Heart right ventricle (tissue), 16 donors: ENCODE measurements at regions of chr13 and their contacts with region 1.

Region 1: DNA sequence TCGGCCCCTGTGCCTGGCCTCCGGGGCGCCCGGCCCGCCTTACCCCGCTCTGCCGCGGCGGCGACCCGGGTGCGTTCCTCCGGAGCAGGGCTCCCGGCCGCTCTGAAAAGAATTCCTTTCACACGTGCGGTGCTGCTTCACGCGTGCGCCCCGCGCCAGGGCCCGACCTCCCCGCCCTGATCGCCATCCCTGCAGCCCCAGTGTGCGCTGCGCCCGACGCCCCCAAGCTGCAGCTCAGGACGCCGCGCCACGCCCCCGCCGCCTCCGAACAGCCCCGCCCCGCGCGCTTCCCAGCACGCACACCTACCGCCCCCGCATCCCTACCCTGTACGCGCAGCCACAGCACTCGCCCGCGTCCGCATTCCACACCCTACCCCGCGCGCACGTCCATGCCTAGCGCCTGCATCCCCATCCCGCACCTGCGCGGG is at the start of gene GJA3:
- DNase-seq: peak; percentile 61 to 66
- ATAC-seq: peak; percentile 79 to 93 (median 86)
- H3K4me3 ChIP-seq: peak within 1 kb of the TSS; percentile 33 to 66 (median 62)
- H3K27ac ChIP-seq: peak within 1 kb of the TSS; percentile 19 to 89 (median 79)
- H3K4me1 ChIP-seq: peaks cover 0 to 23% (median 12%) of the 10 kb centered on the region in 9 donors
- H3K27me3 ChIP-seq: peaks cover 0 to 93% (median 76%) of the 10 kb centered on the region in 7 donors
- CTCF ChIP-seq: peak in 3 of 9 donors; percentile 31 to 36 (median 35)
- total RNA-seq, gene GJA3: 14.2 to 30.1 (median 19.4) TPM

Region 2: GRCh38 chr13:19984430-19985218 is 176.2 kb before region 1 on chr13:
- intact Hi-C with region 1: loop called in 4 of 10 experiments (anchors 2 to 10 kb)
- DNase-seq: no peak
- ATAC-seq: peak in 6 of 8 donors; percentile 48 to 60 (median 58)
- H3K4me3 ChIP-seq: no peak overlapping the region
- H3K27ac ChIP-seq: peak overlapping the region in 1 of 10 donors; percentile 28
- H3K4me1 ChIP-seq: peaks cover 0 to 30% (median 16%) of the 10 kb centered on the region in 9 donors
- H3K27me3 ChIP-seq: no peaks in the 10 kb centered on the region
- CTCF ChIP-seq: peak in 7 of 9 donors; percentile 41 to 69 (median 55)

Region 3: GRCh38 chr13:20049558-20050473 is 111.0 kb before region 1 on chr13:
- intact Hi-C with region 1: loop called in 4 of 10 experiments (anchors 5 to 10 kb)
- DNase-seq: no peak
- ATAC-seq: no peak
- H3K4me3 ChIP-seq: peak overlapping the region in 2 of 10 donors; percentile 2 to 12
- H3K27ac ChIP-seq: peak overlapping the region in 4 of 10 donors; percentile 20 to 54 (median 36)
- H3K4me1 ChIP-seq: peaks cover 0 to 36% (median 17%) of the 10 kb centered on the region in 9 donors
- H3K27me3 ChIP-seq: no peaks in the 10 kb centered on the region
- CTCF ChIP-seq: no peak

Region 4: DNA sequence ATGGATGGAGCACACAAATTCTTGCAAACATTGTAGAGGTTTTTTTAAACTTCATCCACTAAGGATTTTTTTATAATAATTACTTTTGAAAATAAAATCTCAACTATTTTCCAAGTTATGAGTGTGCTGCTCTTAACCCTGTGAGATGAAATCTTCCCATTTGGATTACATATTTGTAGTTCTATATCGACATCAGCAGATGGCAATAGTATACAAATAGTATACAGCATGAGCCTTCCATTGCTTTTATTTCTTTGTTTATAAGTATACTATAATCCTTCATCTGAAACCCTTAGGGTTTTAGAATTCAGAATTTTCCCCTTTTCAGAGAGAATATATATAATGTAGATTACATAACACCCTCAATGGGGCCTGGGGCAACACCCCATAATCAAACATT is 70.5 kb before region 1 on chr13:
- intact Hi-C with region 1: loop called in 8 of 10 experiments (anchors 2 to 10 kb)
- DNase-seq: no peak
- ATAC-seq: peak in 2 of 8 donors; percentile 52 to 53
- H3K4me3 ChIP-seq: no peak overlapping the region
- H3K27ac ChIP-seq: no peak overlapping the region
- H3K4me1 ChIP-seq: peaks cover 0 to 14% (median 0%) of the 10 kb centered on the region in 9 donors
- H3K27me3 ChIP-seq: no peaks in the 10 kb centered on the region
- CTCF ChIP-seq: peak in 4 of 9 donors; percentile 29 to 48 (median 38)

Region 5: DNA sequence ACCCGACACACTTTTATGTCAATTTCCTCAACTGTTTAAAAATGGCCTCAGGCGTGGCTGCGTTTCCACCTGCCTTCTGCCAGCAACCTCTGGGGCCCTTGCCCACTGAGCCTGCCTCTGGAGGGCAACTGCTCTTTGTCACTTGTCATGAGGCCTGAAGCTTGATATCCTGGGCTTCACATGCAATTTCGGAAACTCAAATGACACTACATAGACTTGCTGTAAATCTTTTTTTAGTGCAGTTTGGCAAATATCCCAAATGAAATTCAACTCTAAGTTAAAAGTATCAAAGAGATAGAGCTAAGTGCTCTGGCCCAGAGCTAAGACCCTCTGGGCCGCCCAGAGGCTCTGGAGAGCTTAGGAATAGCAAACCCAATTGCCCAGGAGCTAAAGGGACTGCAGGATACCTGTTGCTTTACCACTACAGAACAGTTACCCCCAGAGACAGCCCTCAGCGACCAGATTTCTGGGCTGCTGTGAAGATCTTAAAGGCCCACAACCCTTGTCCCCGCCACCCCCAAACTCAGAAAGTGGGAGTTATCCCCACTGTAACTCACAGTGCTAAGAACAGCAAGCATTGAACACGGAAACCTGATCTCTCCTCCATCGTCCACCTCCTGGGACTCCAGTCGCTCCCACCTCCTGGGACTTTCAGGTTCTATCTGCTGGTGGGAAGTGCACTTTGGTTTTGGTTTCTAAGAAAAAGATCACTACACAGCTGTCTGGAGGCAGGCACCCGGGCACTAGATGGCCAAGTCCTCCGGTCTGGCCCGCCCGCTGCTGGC is 19.4 kb before region 1 on chr13:
- intact Hi-C with region 1: loop called in 1 of 10 experiments (anchors 2 kb)
- DNase-seq: peak; percentile 64 to 73
- ATAC-seq: peak; percentile 83 to 95 (median 92)
- H3K4me3 ChIP-seq: peak overlapping the region in 3 of 10 donors; percentile 7 to 13 (median 8)
- H3K27ac ChIP-seq: peak overlapping the region in 9 of 10 donors; percentile 51 to 88 (median 76)
- H3K4me1 ChIP-seq: peaks cover 4 to 54% (median 26%) of the 10 kb centered on the region in 9 donors
- H3K27me3 ChIP-seq: peaks cover 0 to 71% (median 42%) of the 10 kb centered on the region in 7 donors
- CTCF ChIP-seq: no peak